ENCODE measurements at regions of chr20 and their contacts with region 1.

Region 1: DNA sequence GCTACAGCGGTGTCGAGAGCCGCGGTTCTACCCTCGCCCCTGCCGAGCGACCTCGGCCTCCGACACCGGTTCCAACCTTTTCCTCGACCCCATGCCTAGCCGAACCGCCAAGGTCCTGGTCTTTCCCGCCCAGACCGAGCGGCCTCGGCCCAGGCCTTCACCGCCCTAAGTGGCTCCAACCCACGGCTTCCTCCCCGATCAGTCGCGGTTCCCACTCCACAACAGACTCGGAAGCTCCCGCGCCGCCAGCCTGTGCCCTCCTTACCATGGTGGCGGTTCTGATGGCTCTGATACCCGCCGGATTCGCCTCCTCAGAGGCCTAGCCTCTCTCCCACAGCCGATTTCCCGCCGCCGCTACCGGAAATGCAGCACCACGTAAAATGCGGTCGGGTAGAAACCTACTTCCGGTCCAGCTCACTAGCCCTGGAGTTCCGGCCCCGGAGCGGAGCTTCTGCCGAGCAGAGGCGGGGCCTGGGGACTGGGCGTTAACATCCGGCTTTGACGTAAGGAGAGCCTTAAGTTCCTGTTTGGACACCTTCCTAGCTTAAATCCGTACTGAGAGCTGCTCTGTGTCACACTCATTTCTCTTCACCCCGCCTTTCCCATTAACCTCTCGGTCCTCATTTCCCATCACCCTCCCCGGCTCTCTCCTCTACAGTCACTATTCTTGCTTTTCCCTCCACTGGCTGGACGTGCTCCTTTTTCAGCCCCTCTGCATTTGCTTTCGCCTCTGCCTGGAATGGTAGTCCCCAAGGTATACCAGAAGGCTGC is at the start of gene SNRPB:
- DNase-seq: peak; percentile 96
- H3K4me3 ChIP-seq: peak within 1 kb of the TSS; percentile 92
- H3K27ac ChIP-seq: peak within 1 kb of the TSS; percentile 90
- H3K4me1 ChIP-seq: peaks cover 21% of the 10 kb centered on the region
- H3K27me3 ChIP-seq: no peaks in the 10 kb centered on the region
- CTCF ChIP-seq: no peak
- total RNA-seq, gene SNRPB: 310 and 349 TPM in 2 replicates

Region 2: DNA sequence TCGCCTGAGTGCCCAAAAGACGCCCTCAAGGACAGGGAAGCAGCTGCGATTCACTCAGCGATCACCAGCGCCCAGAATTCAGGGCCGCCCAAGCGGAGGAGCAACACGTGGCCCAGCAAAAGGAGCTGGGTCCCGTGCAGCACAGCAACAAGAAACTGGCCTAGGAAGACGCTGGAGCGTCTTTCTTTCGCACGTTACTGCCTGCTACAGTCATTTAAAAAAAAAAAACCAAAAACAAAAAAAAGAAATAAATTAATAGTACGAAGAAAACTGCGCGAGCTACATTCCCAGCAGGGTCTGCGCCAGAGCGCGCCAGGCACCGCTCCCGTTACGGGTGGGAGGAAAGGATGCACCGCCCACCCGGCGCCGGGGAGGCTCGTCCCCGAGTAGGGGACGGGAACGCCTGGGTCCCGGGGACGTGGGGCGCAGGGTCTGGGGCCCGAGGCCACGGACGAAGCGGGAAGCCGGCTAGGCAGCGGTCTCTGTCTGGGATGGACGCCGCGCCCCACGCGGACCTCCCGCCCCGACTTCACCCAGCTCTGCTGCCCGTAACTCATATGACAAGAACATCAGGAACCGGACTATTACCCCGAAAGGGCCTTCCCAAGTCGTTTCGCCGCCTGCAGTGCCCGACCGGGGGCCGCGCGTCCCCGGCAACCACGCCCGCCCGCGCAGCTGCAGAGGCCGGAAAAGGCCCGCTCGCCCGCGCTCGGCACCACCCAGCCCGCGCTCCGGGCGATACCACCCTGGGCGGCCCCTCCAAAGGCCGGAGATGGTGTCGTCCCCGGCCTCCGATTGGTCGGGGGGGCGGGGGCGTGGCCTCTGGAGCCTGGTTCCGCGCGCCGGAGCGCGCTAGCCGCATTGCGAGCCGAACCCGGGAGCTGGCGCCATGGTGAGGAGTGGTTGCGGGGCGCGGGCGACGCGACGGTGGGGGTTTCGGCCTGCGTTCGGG is 181.4 kb after region 1 on chr20 and contains the start of gene NOP56:
- CTCF ChIA-PET with region 1: no interaction called
- POLR2A ChIA-PET with region 1: interaction called, 28 read pairs
- intact Hi-C with region 1: loop called (anchors 1 kb)
- DNase-seq: peak; percentile 74 to 98
- H3K4me3 ChIP-seq: peak within 1 kb of the TSS; percentile 94
- H3K27ac ChIP-seq: peak within 1 kb of the TSS; percentile 64
- H3K4me1 ChIP-seq: peaks cover 22% of the 10 kb centered on the region
- H3K27me3 ChIP-seq: no peaks in the 10 kb centered on the region
- CTCF ChIP-seq: no peak
- total RNA-seq, gene NOP56: 194 and 210 TPM in 2 replicates

Region 3: DNA sequence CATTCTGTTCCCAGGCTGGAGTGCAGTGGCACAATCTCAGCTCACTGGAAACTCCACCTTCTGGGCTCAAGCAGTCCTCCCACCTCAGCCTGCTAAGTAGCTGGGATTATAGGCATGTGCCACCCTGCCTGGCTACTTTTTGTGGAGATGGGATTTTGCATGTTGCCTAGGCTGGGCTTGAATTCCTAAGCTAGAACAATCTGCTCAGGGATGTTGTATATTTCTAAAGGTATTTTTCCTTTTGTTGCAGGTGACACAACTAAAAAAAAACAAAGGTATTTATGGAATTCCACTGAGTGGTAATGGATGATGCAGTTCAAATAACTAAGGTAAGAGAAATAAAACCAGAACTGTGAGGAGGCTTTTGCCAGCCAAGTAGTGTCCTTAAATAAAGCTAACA is 452.3 kb after region 1 on chr20:
- CTCF ChIA-PET with region 1: no interaction called
- POLR2A ChIA-PET with region 1: interaction called, 14 read pairs
- intact Hi-C with region 1: no loop called
- DNase-seq: peak; percentile 56 to 68
- H3K4me3 ChIP-seq: no peak overlapping the region
- H3K27ac ChIP-seq: peak overlapping the region; percentile 12; the same call in 1 of the 2 replicates
- H3K4me1 ChIP-seq: peaks cover 24% of the 10 kb centered on the region
- H3K27me3 ChIP-seq: no peaks in the 10 kb centered on the region
- CTCF ChIP-seq: no peak